Heart right ventricle (tissue), 16 donors: ENCODE measurements at regions of chr18 and their contacts with region 1.

Region 1: DNA sequence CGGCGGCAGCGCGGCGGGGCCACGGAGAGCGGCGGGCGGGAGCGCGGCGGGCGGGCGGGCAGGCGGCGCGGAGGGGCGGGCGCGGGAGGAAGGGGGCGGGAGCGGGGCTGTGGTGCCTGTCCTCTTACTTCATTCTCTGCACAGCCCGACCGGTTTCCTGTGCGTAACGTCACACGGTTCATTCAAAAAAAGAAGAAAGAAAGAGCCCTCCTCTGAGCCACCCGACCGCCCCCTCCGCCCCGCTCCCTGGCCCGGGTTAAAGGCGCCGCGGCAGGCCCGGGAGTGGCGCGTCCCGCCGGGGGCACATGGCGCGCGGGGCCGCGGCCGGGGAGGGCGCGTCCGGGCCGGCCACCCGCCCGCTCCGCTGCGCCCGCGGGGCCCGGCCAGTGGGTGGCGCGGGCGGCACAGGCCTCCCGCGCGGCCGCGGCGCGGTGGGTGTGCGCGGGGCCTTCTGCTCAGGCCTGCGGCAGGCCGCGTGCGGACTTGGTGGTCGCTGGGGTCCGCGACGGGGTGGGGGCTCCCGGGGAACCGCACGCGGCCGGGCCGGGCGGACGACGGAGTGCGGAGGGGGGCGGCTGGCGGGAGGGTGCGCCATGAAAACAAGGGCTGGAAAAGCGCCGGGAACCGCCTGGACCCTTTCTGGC is 599 bp upstream of the BCL2 start:
- DNase-seq: peak; percentile 80 to 90
- ATAC-seq: peak; percentile 79 to 88 (median 84)
- H3K4me3 ChIP-seq: peak overlapping the region; percentile 63 to 91 (median 77)
- H3K27ac ChIP-seq: peak overlapping the region; percentile 52 to 89 (median 78)
- H3K4me1 ChIP-seq: peaks cover 0 to 55% (median 34%) of the 10 kb centered on the region in 9 donors
- H3K27me3 ChIP-seq: peaks cover 0 to 8% (median 0%) of the 10 kb centered on the region in 7 donors
- CTCF ChIP-seq: peak in 2 of 9 donors; percentile 20 to 22

Region 2: GRCh38 chr18:63131106-63131958 is 188.8 kb before region 1 on chr18:
- intact Hi-C with region 1: loop called (anchors 1 to 5 kb)
- DNase-seq: peak in 1 of 2 donors; percentile 74
- ATAC-seq: peak; percentile 41 to 80 (median 69)
- H3K4me3 ChIP-seq: no peak overlapping the region
- H3K27ac ChIP-seq: peak overlapping the region in 2 of 10 donors; percentile 9 to 15
- H3K4me1 ChIP-seq: peaks cover 3 to 15% (median 8%) of the 10 kb centered on the region in 9 donors
- H3K27me3 ChIP-seq: no peaks in the 10 kb centered on the region
- CTCF ChIP-seq: peak; percentile 41 to 85 (median 75)

Region 3: GRCh38 chr18:63177919-63178821 is 142.0 kb before region 1 on chr18:
- intact Hi-C with region 1: loop called in 1 of 10 experiments (anchors 5 kb)
- DNase-seq: peak; percentile 48 to 73
- ATAC-seq: peak; percentile 52 to 80 (median 63)
- H3K4me3 ChIP-seq: peak overlapping the region in 6 of 10 donors; percentile 3 to 46 (median 32)
- H3K27ac ChIP-seq: peak overlapping the region in 9 of 10 donors; percentile 9 to 85 (median 47)
- H3K4me1 ChIP-seq: peaks cover 4 to 71% (median 28%) of the 10 kb centered on the region in 9 donors
- H3K27me3 ChIP-seq: no peaks in the 10 kb centered on the region
- CTCF ChIP-seq: no peak

Region 4: DNA sequence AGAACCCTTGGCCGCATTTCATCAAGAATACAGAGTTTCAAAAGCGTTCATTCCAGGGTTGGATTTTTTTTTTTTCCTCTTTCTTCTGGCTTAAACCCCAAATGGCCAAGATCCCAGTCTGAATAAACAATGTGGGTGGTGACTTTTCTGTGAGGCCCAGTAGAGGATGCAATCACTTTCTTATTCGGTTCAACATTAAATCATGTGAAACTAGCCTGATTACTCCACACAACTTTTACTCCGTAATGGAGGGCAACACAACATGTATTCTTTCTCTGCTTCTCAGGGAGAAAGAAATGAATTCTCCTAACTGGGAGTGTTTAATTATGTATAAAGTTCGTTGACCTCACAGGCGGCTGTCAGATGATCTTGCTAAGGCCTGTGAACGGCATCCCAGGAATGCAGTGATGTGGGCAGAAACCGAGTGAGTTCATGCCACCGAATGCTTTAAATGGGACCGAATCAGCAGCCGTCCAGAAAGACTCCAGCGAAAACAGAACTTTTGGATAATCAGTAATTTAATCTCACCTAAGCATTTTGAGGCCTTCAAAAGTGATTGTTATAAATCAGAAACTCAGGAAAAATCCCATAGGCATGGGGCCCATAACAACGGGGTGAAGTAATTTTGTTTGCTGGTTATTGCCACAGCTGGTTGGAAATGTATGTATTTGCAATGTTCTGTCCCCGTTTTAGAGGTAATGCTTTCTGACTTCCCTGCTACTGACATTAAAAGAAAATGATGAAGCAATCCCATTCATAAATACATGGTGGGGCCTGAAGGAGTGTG is 82.1 kb before region 1 on chr18:
- intact Hi-C with region 1: loop called in 2 of 10 experiments (anchors 10 kb)
- DNase-seq: peak in 1 of 2 donors; percentile 47
- ATAC-seq: peak; percentile 62 to 84 (median 78)
- H3K4me3 ChIP-seq: peak overlapping the region in 4 of 10 donors; percentile 4 to 28 (median 14)
- H3K27ac ChIP-seq: peak overlapping the region; percentile 11 to 89 (median 76)
- H3K4me1 ChIP-seq: peaks cover 5 to 46% (median 25%) of the 10 kb centered on the region in 9 donors
- H3K27me3 ChIP-seq: no peaks in the 10 kb centered on the region
- CTCF ChIP-seq: no peak

Region 5: GRCh38 chr18:63262369-63263335 is 57.5 kb before region 1 on chr18:
- intact Hi-C with region 1: loop called in 2 of 10 experiments (anchors 5 to 10 kb)
- DNase-seq: peak in 1 of 2 donors; percentile 41
- ATAC-seq: peak; percentile 50 to 88 (median 81)
- H3K4me3 ChIP-seq: no peak overlapping the region
- H3K27ac ChIP-seq: peak overlapping the region; percentile 3 to 74 (median 47)
- H3K4me1 ChIP-seq: peaks cover 0 to 27% (median 20%) of the 10 kb centered on the region in 9 donors
- H3K27me3 ChIP-seq: no peaks in the 10 kb centered on the region
- CTCF ChIP-seq: peak in 6 of 9 donors; percentile 14 to 55 (median 30)

Region 6: DNA sequence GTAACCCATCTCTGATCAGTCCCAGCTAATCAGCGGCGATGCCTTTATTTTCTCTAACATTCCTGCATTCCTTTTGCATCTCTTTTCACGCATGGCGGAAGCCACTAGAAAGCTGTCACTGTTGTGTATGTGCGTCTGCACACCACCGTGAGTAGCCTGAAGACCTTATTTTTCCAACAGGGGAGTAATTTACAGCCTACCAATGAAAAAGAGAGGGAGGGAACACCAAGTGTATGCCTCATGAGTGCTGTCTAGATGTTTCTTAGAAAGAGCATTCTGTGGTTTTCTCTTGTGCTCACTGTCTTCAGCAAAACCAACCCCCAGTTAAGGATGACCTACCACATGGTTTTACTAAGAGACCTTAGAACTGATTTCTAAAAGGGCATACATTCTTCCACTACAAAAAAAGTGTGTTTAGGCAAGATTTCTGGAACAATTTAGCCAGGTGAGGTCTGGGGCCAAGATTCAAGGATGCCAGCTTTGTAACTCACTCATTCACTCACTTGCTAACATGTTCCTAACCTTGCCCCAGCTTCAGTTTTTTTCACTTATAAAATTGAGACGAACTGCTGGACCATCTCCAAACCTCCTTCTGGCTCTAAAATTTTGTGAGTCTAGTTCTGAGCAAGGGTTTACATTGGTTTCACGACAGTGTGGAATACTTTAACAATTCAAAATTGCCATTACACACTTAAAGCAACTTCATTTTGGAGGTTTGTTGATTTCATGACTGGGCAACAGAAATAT is 52.0 kb before region 1 on chr18:
- intact Hi-C with region 1: loop called in 2 of 10 experiments (anchors 5 to 10 kb)
- DNase-seq: no peak
- ATAC-seq: no peak
- H3K4me3 ChIP-seq: no peak overlapping the region
- H3K27ac ChIP-seq: no peak overlapping the region
- H3K4me1 ChIP-seq: peaks cover 0 to 34% (median 16%) of the 10 kb centered on the region in 9 donors
- H3K27me3 ChIP-seq: no peaks in the 10 kb centered on the region
- CTCF ChIP-seq: no peak

Region 7: GRCh38 chr18:63382843-63383242 is 62.7 kb after region 1 on chr18:
- intact Hi-C with region 1: no loop called
- DNase-seq: no peak
- ATAC-seq: no peak
- H3K4me3 ChIP-seq: no peak overlapping the region
- H3K27ac ChIP-seq: no peak overlapping the region
- H3K4me1 ChIP-seq: peaks cover 0 to 10% (median 0%) of the 10 kb centered on the region in 9 donors
- H3K27me3 ChIP-seq: no peaks in the 10 kb centered on the region
- CTCF ChIP-seq: no peak